ENCODE measurements at regions of chr1 and their contacts with region 1.

Region 1: DNA sequence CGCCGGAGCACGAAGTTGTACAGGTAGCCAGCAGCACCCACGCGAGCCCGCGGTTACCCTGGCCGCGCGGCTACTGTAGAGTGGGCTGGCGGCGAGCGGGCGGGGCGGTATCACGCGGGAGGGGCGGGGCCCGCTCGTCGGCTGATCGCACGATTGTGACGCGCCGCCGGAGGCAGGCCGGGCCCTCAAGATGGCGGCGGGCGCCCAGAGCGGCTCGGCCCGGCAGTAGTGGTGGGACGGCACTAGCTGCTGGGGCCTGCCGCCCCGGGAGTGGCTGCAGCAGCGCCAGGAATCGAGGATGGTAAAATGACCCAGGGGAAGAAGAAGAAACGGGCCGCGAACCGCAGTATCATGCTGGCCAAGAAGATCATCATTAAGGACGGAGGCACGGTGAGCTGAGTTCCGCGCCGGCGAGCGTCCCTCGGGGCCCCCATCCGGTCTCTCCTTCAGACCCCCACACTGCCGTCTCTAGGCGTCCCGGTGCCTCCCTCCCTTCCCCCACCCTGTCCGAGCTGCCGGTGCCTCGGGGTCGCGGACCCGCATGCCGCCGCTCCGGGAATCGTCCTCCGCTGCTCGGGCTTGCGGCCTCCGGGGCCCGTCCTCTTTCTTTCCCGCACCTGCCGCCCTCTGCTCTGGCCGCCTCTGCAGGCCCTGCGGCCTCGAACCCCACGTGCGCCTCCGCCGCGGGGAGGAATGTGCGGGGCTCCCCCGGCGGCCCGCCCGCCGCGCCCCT is 68.3 kb downstream of the SLC35A3 start:
- DNase-seq: peak; percentile 89
- H3K4me3 Mint-ChIP-seq: peak overlapping the region; percentile 95
- H3K27ac Mint-ChIP-seq: peak overlapping the region; percentile 99
- H3K4me1 Mint-ChIP-seq: peaks cover 54% of the 10 kb centered on the region
- H3K27me3 Mint-ChIP-seq: no peaks in the 10 kb centered on the region

Region 2: GRCh38 chr1:98813738-98814309 is 1224.3 kb before region 1 on chr1:
- CTCF ChIA-PET with region 1: no interaction called
- intact Hi-C with region 1: loop called (anchors 5 kb)
- DNase-seq: peak; percentile 14
- H3K4me3 Mint-ChIP-seq: no peak overlapping the region
- H3K27ac Mint-ChIP-seq: peak overlapping the region; percentile 72
- H3K4me1 Mint-ChIP-seq: peaks cover 28% of the 10 kb centered on the region
- H3K27me3 Mint-ChIP-seq: no peaks in the 10 kb centered on the region

Region 3: DNA sequence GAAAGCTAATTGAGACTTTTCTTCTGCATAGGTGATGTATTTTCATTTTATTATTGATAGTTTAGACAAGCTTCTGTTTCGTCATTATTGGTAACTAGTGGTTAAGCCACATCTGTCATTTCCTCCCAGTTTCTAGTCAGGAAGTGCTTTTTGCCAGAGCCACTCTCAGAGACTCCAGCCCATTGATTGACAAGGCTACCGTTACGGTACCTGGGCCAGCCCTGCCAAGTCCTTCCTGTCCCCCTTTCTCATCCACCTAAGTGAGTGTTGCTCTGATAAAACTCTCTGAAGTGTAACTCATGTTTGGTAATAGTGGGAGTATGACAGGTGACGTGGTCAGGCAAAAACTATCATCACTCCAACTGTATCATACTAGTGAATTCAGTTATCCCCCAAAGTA is 217.5 kb before region 1 on chr1:
- CTCF ChIA-PET with region 1: no interaction called
- intact Hi-C with region 1: loop called (anchors 1 kb)
- DNase-seq: peak; percentile 54
- H3K4me3 Mint-ChIP-seq: no peak overlapping the region
- H3K27ac Mint-ChIP-seq: no peak overlapping the region
- H3K4me1 Mint-ChIP-seq: peaks cover 11% of the 10 kb centered on the region
- H3K27me3 Mint-ChIP-seq: no peaks in the 10 kb centered on the region

Region 4: DNA sequence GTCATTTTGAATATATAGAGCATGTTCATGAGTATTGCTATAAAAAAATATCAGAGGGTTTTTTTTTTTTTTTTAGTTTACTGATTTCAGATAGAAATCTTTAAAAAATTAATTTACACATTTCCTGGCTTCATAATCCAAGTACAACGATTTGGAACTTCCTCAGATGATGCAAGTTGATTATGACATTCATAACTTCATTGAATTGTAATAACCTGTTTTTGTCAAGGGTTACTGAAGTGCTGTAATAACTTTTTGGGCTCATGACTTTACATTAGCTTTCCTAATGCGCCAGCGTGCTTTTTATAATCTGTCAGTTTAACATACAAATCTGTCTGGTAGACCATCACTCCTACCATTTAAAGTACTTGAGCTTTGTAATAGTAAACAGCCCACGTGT is 13.3 kb after region 1 on chr1:
- CTCF ChIA-PET with region 1: interaction called, 4 read pairs
- intact Hi-C with region 1: loop called (anchors 1 kb)
- DNase-seq: no peak
- H3K4me3 Mint-ChIP-seq: no peak overlapping the region
- H3K27ac Mint-ChIP-seq: peak overlapping the region; percentile 66
- H3K4me1 Mint-ChIP-seq: peaks cover 59% of the 10 kb centered on the region
- H3K27me3 Mint-ChIP-seq: no peaks in the 10 kb centered on the region

Region 5: DNA sequence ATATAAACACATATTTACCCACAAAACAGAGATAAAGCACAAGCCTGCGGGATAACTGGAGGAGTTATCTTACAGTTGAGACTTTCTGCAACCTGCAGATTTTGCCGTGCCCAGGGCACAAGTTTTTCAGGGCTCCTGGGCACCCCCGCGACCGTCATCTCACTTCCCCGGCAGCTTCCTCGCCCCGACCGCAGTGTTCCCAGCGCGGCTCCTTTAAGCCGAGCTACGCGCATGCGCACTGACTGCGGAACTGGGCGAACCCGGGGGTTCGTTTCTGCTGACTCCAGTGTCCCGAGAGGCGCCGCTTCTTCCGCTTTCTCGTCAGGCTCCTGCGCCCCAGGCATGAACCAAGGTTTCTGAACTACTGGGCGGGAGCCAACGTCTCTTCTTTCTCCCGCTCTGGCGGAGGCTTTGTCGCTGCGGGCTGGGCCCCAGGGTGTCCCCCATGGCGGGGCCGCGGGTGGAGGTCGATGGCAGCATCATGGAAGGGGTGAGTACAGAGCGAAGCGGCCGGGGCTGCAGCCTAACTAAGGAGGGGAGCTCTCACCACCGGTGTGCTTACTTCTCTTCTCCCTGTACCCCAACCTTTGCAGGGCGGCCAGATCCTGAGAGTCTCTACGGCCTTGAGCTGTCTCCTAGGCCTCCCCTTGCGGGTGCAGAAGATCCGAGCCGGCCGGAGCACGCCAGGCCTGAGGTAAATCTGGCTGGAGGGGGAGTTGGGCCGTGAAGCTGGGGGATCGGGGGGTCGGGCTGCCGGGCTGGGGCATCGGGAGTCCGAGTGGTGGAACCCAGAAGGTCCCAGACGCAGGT is 228.0 kb after region 1 on chr1 and contains the start of gene RTCA:
- CTCF ChIA-PET with region 1: no interaction called
- intact Hi-C with region 1: loop called (anchors 1 kb)
- DNase-seq: peak; percentile 96
- H3K4me3 Mint-ChIP-seq: peak within 1 kb of the TSS; percentile 100
- H3K27ac Mint-ChIP-seq: peak within 1 kb of the TSS; percentile 96
- H3K4me1 Mint-ChIP-seq: peaks cover 35% of the 10 kb centered on the region
- H3K27me3 Mint-ChIP-seq: no peaks in the 10 kb centered on the region
- total RNA-seq, gene RTCA: 36.7 to 37.5 TPM

Region 6: DNA sequence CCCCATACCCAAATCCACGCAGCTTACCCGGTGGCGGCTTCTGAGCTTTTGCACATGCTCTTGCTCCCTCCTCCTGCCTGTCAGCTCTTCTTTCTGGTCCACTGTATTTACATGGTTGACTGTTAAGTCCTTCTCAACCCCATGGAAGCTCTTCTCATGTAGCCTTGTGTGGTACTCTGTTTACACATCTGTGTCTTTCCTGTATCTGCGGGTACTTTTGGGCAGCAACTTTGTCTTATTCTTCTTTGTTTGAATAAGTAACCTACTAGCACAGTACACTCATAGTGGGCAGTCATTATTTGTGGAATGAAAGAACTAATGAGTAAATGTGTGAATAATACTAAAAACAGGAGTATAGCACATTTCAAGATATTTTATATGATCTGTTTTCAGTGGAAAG is 411.4 kb after region 1 on chr1:
- CTCF ChIA-PET with region 1: interaction called, 5 read pairs
- intact Hi-C with region 1: loop called (anchors 1 kb)
- DNase-seq: peak; percentile 61
- H3K4me3 Mint-ChIP-seq: peak overlapping the region; percentile 9
- H3K27ac Mint-ChIP-seq: peak overlapping the region; percentile 79
- H3K4me1 Mint-ChIP-seq: peaks cover 87% of the 10 kb centered on the region
- H3K27me3 Mint-ChIP-seq: no peaks in the 10 kb centered on the region

Measured in activated naive CD4-positive, alpha-beta T cell treated with anti-CD3 and anti-CD28 coated beads for 36 hours (primary cell).